Natural killer cell (primary cell): ENCODE measurements at regions of chr5 and their contacts with region 1.

Region 1: DNA sequence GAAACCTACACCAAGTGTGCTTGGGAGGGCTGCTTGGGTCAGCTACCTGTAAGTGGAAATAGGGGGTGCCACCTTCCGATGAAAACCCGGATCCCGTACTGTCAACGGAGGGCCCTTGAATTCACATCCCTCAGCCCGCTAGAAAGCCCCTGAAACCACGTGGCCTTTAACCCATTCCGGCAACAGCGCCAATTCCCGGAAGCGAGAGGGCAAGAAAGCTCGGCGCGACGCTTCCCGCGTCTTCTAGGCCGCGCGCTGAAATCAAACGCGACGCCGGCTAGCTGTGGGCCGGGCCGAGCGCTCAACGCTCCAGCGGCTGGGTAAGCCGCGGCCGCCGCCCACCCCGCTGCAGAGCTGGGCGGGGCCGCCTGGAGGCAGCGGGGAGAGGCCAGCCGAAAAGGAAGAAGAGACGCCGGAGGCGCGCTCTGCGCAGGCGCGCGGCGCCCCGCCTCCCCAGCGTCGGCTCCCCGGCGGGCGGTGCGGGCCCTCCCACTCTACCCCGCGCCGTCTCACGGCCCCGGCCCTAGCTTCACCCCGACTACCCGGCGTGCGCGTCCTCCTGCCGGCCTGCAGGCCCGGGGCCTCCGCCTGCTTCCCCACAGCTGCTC is at the start of gene KIF2A:
- DNase-seq: peak; percentile 91 to 97
- ATAC-seq: peak; percentile 79 to 94 (median 86)
- H3K4me3 ChIP-seq: peak within 1 kb of the TSS; percentile 81
- H3K4me3 Mint-ChIP-seq: peak within 1 kb of the TSS; percentile 98
- H3K27ac ChIP-seq: peak within 1 kb of the TSS; percentile 93
- H3K27ac Mint-ChIP-seq: peak within 1 kb of the TSS; percentile 98 to 99
- H3K4me1 ChIP-seq: peaks cover 23% of the 10 kb centered on the region
- H3K4me1 Mint-ChIP-seq: peaks cover 47 to 48% of the 10 kb centered on the region in 2 donors
- H3K27me3 ChIP-seq: no peaks in the 10 kb centered on the region
- H3K27me3 Mint-ChIP-seq: no peaks in the 10 kb centered on the region
- CTCF ChIP-seq: no peak
- total RNA-seq, gene KIF2A: 80.4 to 95.2 (median 80.6) TPM

Region 2: GRCh38 chr5:62340392-62340791 is 34.6 kb after region 1 on chr5:
- intact Hi-C with region 1: loop called (anchors 5 kb)
- DNase-seq: peak in 1 of 2 donors; percentile 72
- ATAC-seq: peak in 1 of 3 donors; percentile 40
- H3K4me3 ChIP-seq: no peak overlapping the region
- H3K4me3 Mint-ChIP-seq: no peak overlapping the region
- H3K27ac ChIP-seq: no peak overlapping the region
- H3K27ac Mint-ChIP-seq: no peak overlapping the region
- H3K4me1 ChIP-seq: peaks cover 18% of the 10 kb centered on the region
- H3K4me1 Mint-ChIP-seq: peaks cover 53 to 57% of the 10 kb centered on the region in 2 donors
- H3K27me3 ChIP-seq: no peaks in the 10 kb centered on the region
- H3K27me3 Mint-ChIP-seq: no peaks in the 10 kb centered on the region
- CTCF ChIP-seq: peak; percentile 9

Region 3: DNA sequence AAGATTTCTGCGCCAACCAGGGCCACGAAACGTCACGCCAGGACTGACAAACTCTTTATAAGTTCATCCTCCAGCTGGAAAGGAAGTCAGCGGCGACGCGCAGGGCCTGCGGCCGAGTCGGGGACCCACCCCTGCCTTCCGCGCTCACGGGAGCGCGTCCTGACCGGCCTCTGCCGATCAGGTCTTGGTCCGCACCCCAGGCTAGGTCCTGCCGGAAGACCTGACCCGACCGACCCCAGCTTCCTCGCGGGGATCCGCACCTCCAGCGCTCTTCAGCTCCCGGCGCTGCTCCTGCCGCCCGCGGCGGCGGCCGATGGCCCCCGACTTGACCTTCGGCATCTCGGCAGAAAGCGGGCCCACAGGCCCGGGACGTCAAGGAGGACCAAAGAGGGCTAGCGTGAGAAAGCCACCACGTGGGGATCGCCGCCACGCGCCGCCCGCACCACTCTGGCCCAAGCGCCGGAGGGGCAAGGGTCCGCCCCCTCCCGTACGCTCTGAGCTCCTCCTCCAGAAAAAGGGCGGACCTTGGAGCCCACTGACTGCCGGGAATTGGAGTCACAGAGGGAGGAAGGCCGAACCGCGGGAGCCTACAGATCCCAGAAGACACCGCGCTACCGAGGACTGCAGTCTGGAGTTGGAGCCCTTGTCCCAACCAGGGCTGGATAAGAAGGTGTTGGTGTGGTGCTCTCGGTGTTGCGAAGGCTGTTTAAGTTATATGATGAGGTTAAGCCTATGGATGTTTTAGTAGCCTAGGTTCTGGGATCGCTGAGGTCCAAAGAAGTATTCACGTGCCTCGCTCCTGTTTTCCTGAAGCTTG is 97.8 kb after region 1 on chr5 and contains the start of gene DIMT1:
- intact Hi-C with region 1: loop called (anchors 2 kb)
- DNase-seq: peak; percentile 88 to 96
- ATAC-seq: peak; percentile 97 to 100 (median 97)
- H3K4me3 ChIP-seq: peak within 1 kb of the TSS; percentile 73
- H3K4me3 Mint-ChIP-seq: peak within 1 kb of the TSS; percentile 98
- H3K27ac ChIP-seq: peak within 1 kb of the TSS; percentile 92
- H3K27ac Mint-ChIP-seq: peak within 1 kb of the TSS; percentile 94 to 96
- H3K4me1 ChIP-seq: no peaks in the 10 kb centered on the region
- H3K4me1 Mint-ChIP-seq: peaks cover 25 to 30% of the 10 kb centered on the region in 2 donors
- H3K27me3 ChIP-seq: no peaks in the 10 kb centered on the region
- H3K27me3 Mint-ChIP-seq: no peaks in the 10 kb centered on the region
- CTCF ChIP-seq: no peak
- total RNA-seq, gene DIMT1: 8.9 to 10.9 (median 10.1) TPM

Region 4: GRCh38 chr5:62578540-62578939 is 272.7 kb after region 1 on chr5 and contains the start of gene LRRC70:
- intact Hi-C with region 1: loop called (anchors 5 kb)
- DNase-seq: peak in 1 of 2 donors; percentile 88
- ATAC-seq: peak; percentile 91 to 96 (median 91)
- H3K4me3 ChIP-seq: peak within 1 kb of the TSS; percentile 16
- H3K4me3 Mint-ChIP-seq: peak within 1 kb of the TSS; percentile 95
- H3K27ac ChIP-seq: peak within 1 kb of the TSS; percentile 48
- H3K27ac Mint-ChIP-seq: peak within 1 kb of the TSS; percentile 84 to 88
- H3K4me1 ChIP-seq: no peaks in the 10 kb centered on the region
- H3K4me1 Mint-ChIP-seq: peaks cover 42 to 49% of the 10 kb centered on the region in 2 donors
- H3K27me3 ChIP-seq: no peaks in the 10 kb centered on the region
- H3K27me3 Mint-ChIP-seq: no peaks in the 10 kb centered on the region
- CTCF ChIP-seq: no peak
- total RNA-seq, gene LRRC70: 17.6 to 29.5 (median 21.2) TPM